IMR-90 (cell line): ENCODE measurements at regions of chr12 and their contacts with region 1.

Region 1: GRCh38 chr12:88781909-88782308 is 201.6 kb upstream of the KITLG start:
- DNase-seq: peak; percentile 31
- ATAC-seq: peak; percentile 64
- H3K4me3 ChIP-seq: no peak overlapping the region
- H3K27ac ChIP-seq: no peak overlapping the region
- H3K4me1 ChIP-seq: no peaks in the 10 kb centered on the region
- H3K27me3 ChIP-seq: no peaks in the 10 kb centered on the region
- CTCF ChIP-seq: no peak
- POLR2A ChIP-seq: no peak
- RAD21 ChIP-seq: no peak

Region 2: DNA sequence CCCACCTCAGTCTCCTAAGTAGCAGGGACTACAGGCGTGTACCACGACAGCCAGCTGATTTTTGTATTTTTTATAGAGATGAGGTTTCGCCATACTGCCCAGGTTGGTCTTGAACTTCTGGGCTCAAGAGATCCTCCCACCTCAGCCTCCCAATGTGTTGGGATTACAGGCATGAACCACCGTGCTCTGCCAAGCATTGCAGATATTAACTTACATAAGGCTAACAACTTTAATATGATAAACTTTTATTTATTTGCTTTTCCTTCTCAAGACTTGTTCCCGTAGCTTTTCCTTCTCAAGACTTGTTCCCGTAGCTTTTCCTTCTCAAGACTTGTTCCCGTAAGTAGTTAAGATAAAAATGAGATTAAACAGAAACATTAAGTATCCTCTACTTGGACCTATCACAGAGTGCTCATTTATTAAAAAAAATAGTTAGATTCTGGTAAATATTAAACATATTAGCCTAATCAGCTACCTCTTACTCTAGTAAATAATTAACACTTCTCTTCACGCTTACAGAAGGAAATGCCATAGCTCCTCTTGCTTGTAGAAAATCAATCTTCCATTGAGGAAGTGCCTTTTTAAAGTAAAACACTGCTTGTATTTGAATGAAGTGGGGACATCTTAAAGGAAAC is 44.0 kb before region 1 on chr12:
- CTCF ChIA-PET with region 1: no interaction called
- POLR2A ChIA-PET with region 1: no interaction called
- dilution Hi-C with region 1: no loop called
- in situ Hi-C with region 1: no loop called
- intact Hi-C with region 1: no loop called
- DNase-seq: no peak
- ATAC-seq: no peak
- H3K4me3 ChIP-seq: no peak overlapping the region
- H3K27ac ChIP-seq: no peak overlapping the region
- H3K4me1 ChIP-seq: no peaks in the 10 kb centered on the region; the same call in 1 of the 2 replicates
- H3K27me3 ChIP-seq: no peaks in the 10 kb centered on the region
- CTCF ChIP-seq: no peak
- POLR2A ChIP-seq: no peak
- RAD21 ChIP-seq: no peak

Region 3: DNA sequence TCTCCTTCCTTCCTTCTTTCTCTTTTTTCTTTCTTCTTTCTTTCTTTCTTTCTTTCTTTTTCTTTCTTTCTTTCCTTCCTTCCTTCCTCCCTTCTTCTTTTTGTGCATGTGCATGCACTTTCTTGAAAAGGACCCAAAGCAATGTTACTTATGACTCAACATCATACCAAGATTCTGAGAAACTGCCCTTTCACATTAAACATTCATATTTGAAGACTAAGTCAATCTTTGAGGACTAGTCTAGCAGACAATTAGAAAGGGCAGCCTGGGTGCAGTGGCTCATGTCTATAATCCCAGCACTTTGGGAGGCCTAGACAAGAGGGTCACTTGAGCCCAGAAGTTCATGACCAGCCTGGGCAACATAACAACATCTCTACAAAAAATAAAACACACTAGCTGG is 11.2 kb after region 1 on chr12:
- CTCF ChIA-PET with region 1: no interaction called
- POLR2A ChIA-PET with region 1: no interaction called
- dilution Hi-C with region 1: no loop called
- in situ Hi-C with region 1: no loop called
- intact Hi-C with region 1: loop called (anchors 1 kb)
- DNase-seq: peak; percentile 75
- ATAC-seq: peak; percentile 61
- H3K4me3 ChIP-seq: no peak overlapping the region
- H3K27ac ChIP-seq: peak overlapping the region; percentile 41
- H3K4me1 ChIP-seq: no peaks in the 10 kb centered on the region; the same call in 1 of the 2 replicates
- H3K27me3 ChIP-seq: no peaks in the 10 kb centered on the region
- CTCF ChIP-seq: no peak
- POLR2A ChIP-seq: no peak
- RAD21 ChIP-seq: no peak

Region 4: DNA sequence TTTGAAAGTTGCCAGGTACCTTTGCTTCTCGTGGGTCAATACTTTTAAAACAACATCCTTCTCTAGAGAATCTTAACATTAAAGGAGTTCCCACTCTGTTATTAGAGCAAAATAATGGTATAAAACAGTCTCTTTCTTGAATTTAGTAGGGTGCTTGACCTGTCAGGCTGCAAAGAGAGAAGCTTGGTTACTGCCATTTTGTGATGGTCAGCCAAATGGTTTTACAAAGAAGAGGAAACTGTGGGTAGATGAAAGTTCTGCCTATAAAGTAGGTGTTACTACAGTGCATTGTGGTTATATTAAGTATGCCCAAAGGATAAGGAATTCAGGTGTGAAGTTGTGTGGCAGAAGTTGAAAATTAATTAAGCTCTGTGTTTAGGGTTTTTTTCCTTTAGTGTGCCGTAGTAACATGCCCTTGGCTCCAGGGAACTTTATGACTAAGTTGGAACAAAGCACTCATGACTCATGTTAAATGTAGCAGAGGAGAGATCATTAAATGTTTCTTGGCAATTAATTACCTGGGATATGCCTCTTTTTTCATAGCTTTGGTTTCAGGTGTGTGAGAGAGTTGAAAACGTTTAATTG is 152.3 kb after region 1 on chr12:
- CTCF ChIA-PET with region 1: no interaction called
- POLR2A ChIA-PET with region 1: no interaction called
- dilution Hi-C with region 1: no loop called
- in situ Hi-C with region 1: no loop called
- intact Hi-C with region 1: no loop called
- DNase-seq: peak; percentile 57
- ATAC-seq: no peak
- H3K4me3 ChIP-seq: no peak overlapping the region
- H3K27ac ChIP-seq: no peak overlapping the region
- H3K4me1 ChIP-seq: no peaks in the 10 kb centered on the region
- H3K27me3 ChIP-seq: no peaks in the 10 kb centered on the region
- CTCF ChIP-seq: no peak
- POLR2A ChIP-seq: no peak
- RAD21 ChIP-seq: no peak

Region 5: DNA sequence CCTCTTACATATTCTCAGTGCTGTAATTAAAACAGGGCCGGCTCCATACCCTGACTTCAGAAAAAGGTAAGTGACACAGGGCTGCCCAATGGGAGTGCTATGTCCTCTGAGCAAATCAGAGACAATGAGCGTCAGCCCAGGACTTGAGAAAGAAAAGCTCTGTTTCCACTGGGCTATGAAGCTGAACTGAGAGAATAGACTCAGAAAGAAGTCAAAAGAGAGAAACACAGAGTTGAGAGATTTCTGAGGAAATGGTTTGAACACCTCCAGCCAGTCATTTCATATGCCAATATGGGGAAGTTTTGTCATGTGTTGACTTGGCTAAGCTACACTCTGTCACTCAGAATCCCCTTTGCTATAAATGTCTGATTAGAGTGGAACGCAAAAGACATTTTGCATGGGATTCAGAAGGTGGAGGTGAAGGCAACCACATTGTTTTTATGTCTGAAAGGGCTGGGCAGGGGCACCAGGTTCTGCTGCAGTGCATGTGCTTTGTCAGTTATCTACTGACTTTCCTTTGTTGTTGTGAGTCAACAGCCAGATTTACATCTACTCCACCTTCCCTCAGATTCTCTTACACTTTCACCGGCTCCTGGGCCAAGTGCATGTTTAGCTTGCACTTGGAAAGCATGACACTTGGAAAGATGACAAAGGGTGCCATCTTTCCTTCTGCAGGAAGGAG is 257.1 kb after region 1 on chr12:
- CTCF ChIA-PET with region 1: no interaction called
- POLR2A ChIA-PET with region 1: no interaction called
- dilution Hi-C with region 1: no loop called
- in situ Hi-C with region 1: no loop called
- intact Hi-C with region 1: no loop called
- DNase-seq: no peak
- ATAC-seq: no peak
- H3K4me3 ChIP-seq: no peak overlapping the region
- H3K27ac ChIP-seq: no peak overlapping the region
- H3K4me1 ChIP-seq: no peaks in the 10 kb centered on the region
- H3K27me3 ChIP-seq: no peaks in the 10 kb centered on the region; the same call in 1 of the 2 replicates
- CTCF ChIP-seq: no peak
- POLR2A ChIP-seq: no peak
- RAD21 ChIP-seq: no peak